Right ventricle myocardium superior (tissue), 1 donor: ENCODE measurements at regions of chr2 and their contacts with region 1.

Region 1: GRCh38 chr2:176088048-176088936 is 4.2 kb upstream of the HOXD13 start:
- DNase-seq: peak; percentile 67
- ATAC-seq: peak; percentile 87

Region 2: DNA sequence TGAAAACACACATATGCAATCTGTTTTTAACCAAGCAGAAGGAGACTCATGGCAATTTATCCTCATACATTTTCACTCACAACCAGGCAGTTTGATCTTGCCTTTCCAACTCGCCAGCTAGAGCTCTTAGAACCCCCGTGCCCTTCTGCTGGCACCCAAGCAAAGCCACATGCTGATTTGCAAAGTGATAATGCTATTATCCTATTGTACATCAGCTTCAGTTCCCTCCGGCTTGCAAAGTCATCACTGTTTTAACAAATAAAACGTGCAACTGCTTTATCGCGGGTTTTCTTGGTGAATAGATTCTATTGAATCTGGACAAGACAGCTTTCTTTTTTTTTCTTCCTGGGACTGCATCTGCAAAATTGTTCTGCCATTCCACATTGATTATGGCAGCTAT is 400.8 kb before region 1 on chr2:
- intact Hi-C with region 1: loop called (anchors 5 kb)
- DNase-seq: no peak
- ATAC-seq: no peak